Activated CD8-positive, alpha-beta T cell treated with anti-CD3 and anti-CD28 coated beads for 36 hours (primary cell): ENCODE measurements at regions of chr1 and their contacts with region 1.

Region 1: GRCh38 chr1:10507111-10507879 is 32.5 kb downstream of the PEX14 start:
- DNase-seq: peak; percentile 69
- ATAC-seq: peak; percentile 57
- H3K4me3 Mint-ChIP-seq: no peak overlapping the region
- H3K27ac Mint-ChIP-seq: no peak overlapping the region
- H3K4me1 Mint-ChIP-seq: peaks cover 42% of the 10 kb centered on the region
- H3K27me3 Mint-ChIP-seq: no peaks in the 10 kb centered on the region
- CTCF ChIP-seq: peak; percentile 88

Region 2: DNA sequence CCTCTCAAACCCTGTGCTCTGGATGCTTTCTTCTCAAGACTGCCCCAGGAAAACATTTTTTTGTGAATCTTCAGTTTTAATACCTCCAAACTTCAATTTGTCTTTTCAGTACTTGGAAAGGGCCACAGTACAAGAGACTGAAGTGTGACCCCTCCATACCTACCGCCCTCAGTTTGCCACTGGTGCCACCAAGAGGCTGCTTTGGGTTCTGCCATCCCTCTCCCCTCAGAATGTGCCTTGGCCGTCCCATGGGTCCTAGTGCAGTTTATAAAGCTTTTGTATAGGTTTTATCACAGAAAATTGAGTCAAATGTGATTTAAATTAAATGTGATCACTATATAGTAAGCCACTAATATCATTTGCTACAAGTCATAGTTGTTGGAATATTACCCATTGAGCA is 169.2 kb before region 1 on chr1:
- CTCF ChIA-PET with region 1: no interaction called
- POLR2A ChIA-PET with region 1: no interaction called
- intact Hi-C with region 1: no loop called
- DNase-seq: peak; percentile 70
- ATAC-seq: peak; percentile 90
- H3K4me3 Mint-ChIP-seq: no peak overlapping the region
- H3K27ac Mint-ChIP-seq: no peak overlapping the region
- H3K4me1 Mint-ChIP-seq: no peaks in the 10 kb centered on the region
- H3K27me3 Mint-ChIP-seq: no peaks in the 10 kb centered on the region
- CTCF ChIP-seq: peak; percentile 74

Region 3: GRCh38 chr1:10353282-10353681 is 154.0 kb before region 1 on chr1:
- CTCF ChIA-PET with region 1: no interaction called
- POLR2A ChIA-PET with region 1: no interaction called
- intact Hi-C with region 1: no loop called
- DNase-seq: no peak
- ATAC-seq: no peak
- H3K4me3 Mint-ChIP-seq: no peak overlapping the region
- H3K27ac Mint-ChIP-seq: no peak overlapping the region
- H3K4me1 Mint-ChIP-seq: no peaks in the 10 kb centered on the region
- H3K27me3 Mint-ChIP-seq: no peaks in the 10 kb centered on the region
- CTCF ChIP-seq: no peak

Region 4: DNA sequence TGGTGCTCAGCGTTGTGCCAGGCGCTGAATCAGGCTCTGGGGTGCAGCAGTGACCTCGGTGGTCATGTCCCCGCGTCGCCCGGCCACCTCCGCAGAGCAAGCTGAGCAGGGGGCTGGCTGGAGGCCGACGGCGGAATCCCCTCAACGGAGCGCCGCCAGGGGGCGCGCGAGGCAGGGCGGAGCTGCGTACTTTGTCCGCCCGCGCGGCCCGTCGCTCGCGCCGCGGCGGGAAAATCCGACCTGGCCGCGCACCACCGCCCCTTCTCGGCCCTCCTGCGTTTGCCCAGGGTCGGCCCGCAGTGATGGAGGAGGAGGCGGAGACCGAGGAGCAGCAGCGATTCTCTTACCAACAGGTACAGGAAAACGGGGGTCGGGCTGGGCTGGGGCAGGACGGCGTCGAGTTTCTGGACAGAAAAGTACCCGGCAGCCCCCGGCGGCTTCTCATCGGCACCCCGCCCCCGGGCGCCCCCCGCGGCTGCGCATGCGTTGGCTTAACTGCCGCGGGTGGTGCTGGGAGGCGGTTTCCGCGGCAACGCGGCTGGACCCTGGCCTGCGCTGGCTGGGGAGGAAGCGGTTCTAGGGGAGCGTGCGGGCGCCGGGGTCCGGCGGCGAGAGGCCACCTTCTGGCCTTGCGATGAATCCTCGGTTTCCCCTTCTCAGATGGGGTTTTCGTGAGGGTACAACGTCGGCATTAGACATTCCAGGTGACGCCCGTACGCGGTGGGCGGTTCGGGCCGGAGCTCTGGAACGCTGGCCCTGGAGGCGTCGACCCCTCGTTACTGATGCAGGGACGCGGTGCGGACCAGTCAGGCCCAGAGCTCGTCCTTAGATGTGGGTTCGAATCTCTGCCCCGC is 76.9 kb before region 1 on chr1 and contains the start of gene CENPS:
- CTCF ChIA-PET with region 1: interaction called, 17 read pairs
- POLR2A ChIA-PET with region 1: interaction called, 3 read pairs
- intact Hi-C with region 1: no loop called
- DNase-seq: peak; percentile 95
- ATAC-seq: peak; percentile 90
- H3K4me3 Mint-ChIP-seq: peak within 1 kb of the TSS; percentile 88
- H3K27ac Mint-ChIP-seq: peak within 1 kb of the TSS; percentile 94
- H3K4me1 Mint-ChIP-seq: peaks cover 16% of the 10 kb centered on the region
- H3K27me3 Mint-ChIP-seq: no peaks in the 10 kb centered on the region
- CTCF ChIP-seq: peak; percentile 98
- total RNA-seq, gene CENPS: 18.3 to 19.4 TPM

Region 5: DNA sequence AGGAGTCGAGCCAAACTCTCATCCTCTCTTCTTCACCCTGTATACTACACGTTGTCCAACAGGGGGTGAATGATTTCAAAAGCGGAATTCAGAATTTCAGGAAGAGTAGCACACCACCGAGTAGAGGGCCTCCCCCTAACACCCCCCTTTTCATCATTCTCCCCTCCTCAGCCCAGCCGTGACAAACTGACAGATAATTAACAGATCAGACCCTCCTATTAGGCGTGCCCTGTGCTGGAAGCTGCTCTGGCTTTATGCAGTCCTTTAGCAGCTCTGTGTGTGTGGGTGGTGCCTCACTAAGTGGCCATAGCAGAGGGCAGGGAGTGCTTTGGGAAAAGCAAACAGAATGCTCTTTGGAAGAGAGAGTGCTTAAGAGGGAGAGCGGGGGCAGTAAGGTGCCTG is 11.7 kb after region 1 on chr1:
- CTCF ChIA-PET with region 1: interaction called, 14 read pairs
- POLR2A ChIA-PET with region 1: interaction called, 9 read pairs
- intact Hi-C with region 1: no loop called
- DNase-seq: no peak
- ATAC-seq: no peak
- H3K4me3 Mint-ChIP-seq: no peak overlapping the region
- H3K27ac Mint-ChIP-seq: no peak overlapping the region
- H3K4me1 Mint-ChIP-seq: peaks cover 64% of the 10 kb centered on the region
- H3K27me3 Mint-ChIP-seq: no peaks in the 10 kb centered on the region
- CTCF ChIP-seq: no peak

Region 6: GRCh38 chr1:10694633-10695627 is 187.6 kb after region 1 on chr1:
- CTCF ChIA-PET with region 1: interaction called, 4 read pairs
- POLR2A ChIA-PET with region 1: no interaction called
- intact Hi-C with region 1: loop called (anchors 5 kb)
- DNase-seq: peak; percentile 77
- ATAC-seq: peak; percentile 57
- H3K4me3 Mint-ChIP-seq: peak overlapping the region; percentile 63
- H3K27ac Mint-ChIP-seq: no peak overlapping the region
- H3K4me1 Mint-ChIP-seq: peaks cover 40% of the 10 kb centered on the region
- H3K27me3 Mint-ChIP-seq: peaks cover 4% of the 10 kb centered on the region
- CTCF ChIP-seq: no peak

Region 7: DNA sequence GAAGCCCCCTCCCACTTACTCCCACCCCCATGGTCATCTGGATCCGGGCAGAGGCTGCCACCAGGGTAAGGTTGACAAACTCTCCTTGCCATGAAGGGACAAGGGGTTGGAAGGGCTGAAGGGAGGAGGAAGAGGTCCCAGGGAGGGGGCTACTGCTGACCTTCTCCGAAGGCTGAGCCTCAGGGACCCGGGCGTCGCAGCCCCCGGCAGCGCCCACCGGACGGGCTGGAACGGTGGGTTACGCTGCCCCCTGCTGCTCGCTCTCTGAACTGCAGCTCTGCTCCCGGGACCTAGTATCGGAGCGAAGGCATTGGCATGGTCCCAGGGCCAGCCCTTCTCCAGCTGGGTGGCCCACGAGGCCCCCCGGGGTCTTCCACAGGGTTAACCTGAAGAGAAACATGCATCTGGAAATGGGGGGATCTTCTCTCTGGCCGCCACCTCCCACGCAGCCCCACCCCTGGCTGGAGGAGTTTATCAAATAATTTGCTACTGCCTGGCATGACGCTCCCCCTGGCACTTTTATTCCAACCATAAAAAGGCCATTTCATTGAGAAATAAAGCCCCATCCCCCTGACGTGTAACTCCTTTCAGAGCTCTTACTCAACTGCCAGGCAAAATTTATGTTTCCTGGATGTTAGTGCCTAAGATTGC is 434.7 kb after region 1 on chr1:
- CTCF ChIA-PET with region 1: interaction called, 7 read pairs
- POLR2A ChIA-PET with region 1: no interaction called
- intact Hi-C with region 1: loop called (anchors 10 kb)
- DNase-seq: peak; percentile 76
- ATAC-seq: peak; percentile 53
- H3K4me3 Mint-ChIP-seq: no peak overlapping the region
- H3K27ac Mint-ChIP-seq: no peak overlapping the region
- H3K4me1 Mint-ChIP-seq: peaks cover 37% of the 10 kb centered on the region
- H3K27me3 Mint-ChIP-seq: peaks cover 50% of the 10 kb centered on the region
- CTCF ChIP-seq: peak; percentile 99